ENCODE measurements at regions of chr19 and their contacts with region 1.

Region 1: GRCh38 chr19:3572132-3572854 is 451 bp upstream of the HMG20B start:
- DNase-seq: peak; percentile 99
- H3K4me3 Mint-ChIP-seq: peak overlapping the region; percentile 71
- H3K27ac Mint-ChIP-seq: peak overlapping the region; percentile 52
- H3K4me1 Mint-ChIP-seq: peaks cover 8% of the 10 kb centered on the region
- H3K27me3 Mint-ChIP-seq: no peaks in the 10 kb centered on the region

Region 2: DNA sequence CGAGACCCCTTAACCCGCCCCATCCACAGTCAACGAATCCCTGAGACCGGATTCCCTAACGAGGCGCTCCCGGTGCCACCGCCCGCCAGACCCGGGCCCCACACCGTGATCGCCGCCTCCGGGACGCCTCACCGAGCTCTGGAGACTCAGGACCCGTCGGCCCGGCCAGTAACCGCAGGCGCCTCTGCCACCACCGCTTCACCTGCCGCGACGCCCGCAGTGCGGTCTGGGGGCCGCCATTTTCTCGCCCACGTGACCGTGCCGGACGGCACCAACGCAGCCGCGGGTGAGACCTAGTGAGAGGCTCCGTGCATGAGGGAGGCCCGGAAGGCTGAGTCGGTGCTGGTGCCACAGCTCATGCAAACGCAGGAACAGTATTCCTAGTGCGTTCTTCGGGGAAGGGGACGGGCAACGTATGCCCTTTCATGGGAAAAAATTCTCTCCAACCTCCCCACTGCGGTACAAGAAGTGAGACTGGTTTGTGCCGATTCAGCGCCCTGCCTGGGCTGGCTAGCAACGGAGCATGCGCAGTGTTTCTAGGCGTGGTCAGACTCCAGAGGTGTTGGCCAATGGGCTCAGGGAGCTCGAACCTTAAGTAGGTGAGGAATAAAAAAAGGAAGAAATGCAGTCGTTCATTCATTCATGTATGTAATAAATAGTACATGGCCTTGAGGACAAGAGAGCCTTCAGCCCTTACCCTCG is 71.7 kb before region 1 on chr19 and contains the start of gene DOHH:
- intact Hi-C with region 1: loop called (anchors 2 kb)
- DNase-seq: peak; percentile 93
- H3K4me3 Mint-ChIP-seq: peak within 1 kb of the TSS; percentile 96
- H3K27ac Mint-ChIP-seq: peak within 1 kb of the TSS; percentile 99
- H3K4me1 Mint-ChIP-seq: peaks cover 18% of the 10 kb centered on the region
- H3K27me3 Mint-ChIP-seq: no peaks in the 10 kb centered on the region
- total RNA-seq, gene DOHH: 19.7 and 20.6 TPM in 2 replicates

Region 3: GRCh38 chr19:3550947-3551807 is 21.1 kb before region 1 on chr19:
- intact Hi-C with region 1: no loop called
- DNase-seq: no peak
- H3K4me3 Mint-ChIP-seq: no peak overlapping the region
- H3K27ac Mint-ChIP-seq: no peak overlapping the region
- H3K4me1 Mint-ChIP-seq: peaks cover 22% of the 10 kb centered on the region
- H3K27me3 Mint-ChIP-seq: no peaks in the 10 kb centered on the region

Region 4: GRCh38 chr19:3586124-3586626 is 13.9 kb after region 1 on chr19:
- intact Hi-C with region 1: no loop called
- DNase-seq: no peak
- H3K4me3 Mint-ChIP-seq: no peak overlapping the region
- H3K27ac Mint-ChIP-seq: no peak overlapping the region
- H3K4me1 Mint-ChIP-seq: no peaks in the 10 kb centered on the region
- H3K27me3 Mint-ChIP-seq: peaks cover 3% of the 10 kb centered on the region

Region 5: DNA sequence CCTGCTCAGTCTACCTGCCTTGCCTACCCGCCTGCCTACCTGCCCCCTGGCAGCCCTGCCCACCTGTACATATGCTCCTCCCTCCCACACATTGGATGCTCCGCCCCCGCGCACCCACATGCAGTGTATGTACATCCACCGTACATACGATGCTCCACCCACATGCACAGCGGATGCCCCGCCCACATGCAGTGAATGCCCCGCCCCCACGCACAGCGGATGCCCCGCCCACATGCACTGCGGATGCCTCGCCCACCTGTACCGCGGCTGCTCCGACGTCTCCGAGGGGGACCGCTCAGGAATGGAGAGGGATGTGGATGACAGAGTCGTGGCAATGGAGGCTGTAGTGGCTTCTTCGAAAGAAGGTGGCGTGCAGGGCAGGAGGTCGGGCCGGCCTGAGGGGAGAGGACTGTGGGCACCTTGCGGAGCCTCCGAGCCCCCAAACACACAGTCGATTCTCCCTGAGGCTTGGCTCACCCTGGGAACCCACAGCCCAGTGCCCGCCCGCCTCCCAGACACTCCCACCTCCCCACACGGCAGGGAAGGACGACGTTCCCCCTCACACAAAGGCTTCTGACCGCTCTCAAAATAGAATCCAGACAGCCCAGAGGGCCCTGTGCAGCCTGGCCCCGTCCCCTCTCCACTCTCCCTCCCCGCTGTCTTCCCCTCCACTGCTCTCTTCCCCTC is 70.8 kb after region 1 on chr19:
- intact Hi-C with region 1: no loop called
- DNase-seq: no peak
- H3K4me3 Mint-ChIP-seq: no peak overlapping the region
- H3K27ac Mint-ChIP-seq: no peak overlapping the region
- H3K4me1 Mint-ChIP-seq: no peaks in the 10 kb centered on the region
- H3K27me3 Mint-ChIP-seq: no peaks in the 10 kb centered on the region